ENCODE measurements at regions of chr10 and their contacts with region 1.

Region 1: GRCh38 chr10:91409869-91410637 is at the start of gene HECTD2:
- DNase-seq: peak; percentile 76
- H3K4me3 Mint-ChIP-seq: peak within 1 kb of the TSS; percentile 87
- H3K27ac Mint-ChIP-seq: peak within 1 kb of the TSS; percentile 90
- H3K4me1 Mint-ChIP-seq: peaks cover 16% of the 10 kb centered on the region
- H3K27me3 Mint-ChIP-seq: peaks cover 17% of the 10 kb centered on the region
- total RNA-seq, gene HECTD2: 6.6 and 8.2 TPM in 2 replicates

Region 2: GRCh38 chr10:91163269-91163868 is 246.7 kb before region 1 on chr10:
- intact Hi-C with region 1: loop called (anchors 2 kb)
- DNase-seq: peak; percentile 70
- H3K4me3 Mint-ChIP-seq: peak overlapping the region; percentile 85
- H3K27ac Mint-ChIP-seq: peak overlapping the region; percentile 76
- H3K4me1 Mint-ChIP-seq: peaks cover 34% of the 10 kb centered on the region
- H3K27me3 Mint-ChIP-seq: no peaks in the 10 kb centered on the region

Region 3: GRCh38 chr10:91424016-91424415 is 14.0 kb after region 1 on chr10:
- intact Hi-C with region 1: loop called (anchors 1 kb)
- DNase-seq: no peak
- H3K4me3 Mint-ChIP-seq: no peak overlapping the region
- H3K27ac Mint-ChIP-seq: peak overlapping the region; percentile 39
- H3K4me1 Mint-ChIP-seq: peaks cover 13% of the 10 kb centered on the region
- H3K27me3 Mint-ChIP-seq: no peaks in the 10 kb centered on the region

Region 4: GRCh38 chr10:91901784-91902677 is 492.0 kb after region 1 on chr10:
- intact Hi-C with region 1: loop called (anchors 5 kb)
- DNase-seq: peak; percentile 19
- H3K4me3 Mint-ChIP-seq: no peak overlapping the region
- H3K27ac Mint-ChIP-seq: peak overlapping the region; percentile 91
- H3K4me1 Mint-ChIP-seq: peaks cover 22% of the 10 kb centered on the region
- H3K27me3 Mint-ChIP-seq: no peaks in the 10 kb centered on the region

Region 5: DNA sequence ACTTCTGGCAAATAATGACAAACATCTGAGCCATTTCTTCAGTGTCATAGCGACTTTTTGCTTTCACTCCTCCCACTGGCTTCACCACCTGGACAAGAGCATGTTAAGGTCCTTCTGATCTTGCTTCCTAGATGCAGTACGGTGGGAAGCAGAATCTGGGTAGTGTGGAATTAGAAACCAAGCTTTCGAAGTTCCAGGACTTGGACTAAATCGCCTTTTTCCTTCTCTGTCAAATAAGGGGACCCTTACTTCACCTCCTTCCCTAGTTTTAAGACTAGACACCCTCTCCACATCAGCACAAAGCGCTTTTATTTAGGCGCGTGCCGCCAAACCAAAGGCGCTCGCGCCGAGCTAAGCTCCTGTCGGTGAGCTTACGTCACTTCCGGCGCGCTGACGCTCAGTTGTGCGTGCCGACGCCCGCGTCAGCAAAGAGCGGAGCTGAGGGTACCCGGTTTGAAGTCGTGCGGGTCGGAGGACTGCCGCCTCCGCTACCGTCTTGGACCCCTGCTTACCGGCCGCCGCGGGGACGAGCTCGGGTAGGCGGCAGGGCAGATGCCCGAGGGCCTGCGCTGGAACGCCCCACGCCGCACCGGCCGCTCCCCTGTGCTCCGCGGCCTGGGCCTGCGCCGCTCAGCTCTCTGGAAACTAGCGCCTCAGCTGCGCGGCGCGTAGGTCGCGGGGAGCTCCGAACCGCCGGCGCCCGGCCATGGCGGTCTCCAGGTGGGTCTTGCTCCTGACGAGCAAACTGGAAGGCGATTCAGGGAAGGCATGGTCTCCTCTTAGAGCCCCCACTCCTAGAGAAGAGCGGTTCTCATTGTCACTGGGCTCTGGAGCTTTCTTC is 513.5 kb after region 1 on chr10 and contains the start of gene BTAF1:
- intact Hi-C with region 1: loop called (anchors 5 kb)
- DNase-seq: peak; percentile 89
- H3K4me3 Mint-ChIP-seq: peak within 1 kb of the TSS; percentile 87
- H3K27ac Mint-ChIP-seq: peak within 1 kb of the TSS; percentile 100
- H3K4me1 Mint-ChIP-seq: peaks cover 29% of the 10 kb centered on the region
- H3K27me3 Mint-ChIP-seq: peaks cover 4% of the 10 kb centered on the region
- total RNA-seq, gene BTAF1: 66.0 and 68.2 TPM in 2 replicates

Measured in activated T-helper 2 cell treated with anti-CD3 and anti-CD28 coated beads, Interferon-gamma antibody, Interleukin-2, Interleukin-4, amounts not matched to agents 10 μg/mL and 5 μg/mL and 100 μg/mL, durations not matched to agents 14 hours and 24 hours and 36 hours (primary cell).